Prostate gland (tissue), 2 donors: ENCODE measurements at regions of chr2 and their contacts with region 1.

Region 1: GRCh38 chr2:28566521-28567041 is 70.7 kb downstream of the PLB1 start:
- DNase-seq: peak; percentile 78
- H3K4me3 ChIP-seq: peak overlapping the region; percentile 48 to 51
- H3K27ac ChIP-seq: peak overlapping the region; percentile 76 to 82
- H3K4me1 ChIP-seq: no peaks in the 10 kb centered on the region
- H3K27me3 ChIP-seq: no peaks in the 10 kb centered on the region
- CTCF ChIP-seq: peak; percentile 99 to 100 (median 100)
- POLR2A ChIP-seq: no peak

Region 2: DNA sequence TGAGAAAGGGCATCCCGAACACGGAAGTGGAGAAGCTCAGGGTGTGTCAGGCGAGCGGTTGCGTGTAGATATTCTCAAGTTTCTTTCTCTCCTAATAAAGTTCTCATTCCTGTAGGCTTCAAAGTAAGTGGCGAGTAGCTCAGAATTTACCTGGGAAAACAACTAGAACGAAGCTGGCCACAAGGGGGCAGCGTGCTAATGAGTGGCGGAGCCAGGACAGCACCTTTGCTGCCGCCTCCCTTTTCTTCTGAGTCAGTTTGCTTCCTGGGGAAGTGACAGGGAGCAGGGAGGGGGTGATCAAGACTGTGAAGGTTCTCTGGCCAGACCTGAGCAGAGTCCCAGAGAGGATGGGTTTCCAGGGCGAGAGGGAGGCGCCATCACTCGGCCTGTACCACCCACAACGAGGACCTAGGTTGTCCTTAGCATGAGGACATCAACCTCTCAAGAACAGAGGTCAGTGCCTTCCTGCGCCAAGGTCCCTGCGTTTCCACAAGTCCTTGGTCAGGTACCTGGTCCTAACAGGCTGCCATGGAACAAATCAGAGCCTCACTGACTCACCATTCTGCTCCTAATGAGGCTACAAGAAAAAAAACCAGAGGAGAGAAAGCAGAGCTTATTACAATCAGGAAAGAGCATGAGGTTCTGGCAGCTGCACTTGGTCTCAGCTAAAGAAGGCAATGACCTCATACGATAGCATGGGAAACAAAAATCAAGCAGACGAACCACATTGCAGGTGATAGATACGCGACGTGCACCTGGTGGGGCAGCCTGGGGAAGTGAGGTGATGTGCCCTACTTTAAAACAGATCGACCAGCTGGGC is 27.9 kb after region 1 on chr2:
- intact Hi-C with region 1: loop called (anchors 2 kb)
- DNase-seq: peak; percentile 95
- H3K4me3 ChIP-seq: no peak overlapping the region
- H3K27ac ChIP-seq: peak overlapping the region; percentile 80 to 89
- H3K4me1 ChIP-seq: peaks cover 2% of the 10 kb centered on the region
- H3K27me3 ChIP-seq: no peaks in the 10 kb centered on the region
- CTCF ChIP-seq: peak; percentile 92 to 96 (median 94)
- POLR2A ChIP-seq: no peak

Region 3: DNA sequence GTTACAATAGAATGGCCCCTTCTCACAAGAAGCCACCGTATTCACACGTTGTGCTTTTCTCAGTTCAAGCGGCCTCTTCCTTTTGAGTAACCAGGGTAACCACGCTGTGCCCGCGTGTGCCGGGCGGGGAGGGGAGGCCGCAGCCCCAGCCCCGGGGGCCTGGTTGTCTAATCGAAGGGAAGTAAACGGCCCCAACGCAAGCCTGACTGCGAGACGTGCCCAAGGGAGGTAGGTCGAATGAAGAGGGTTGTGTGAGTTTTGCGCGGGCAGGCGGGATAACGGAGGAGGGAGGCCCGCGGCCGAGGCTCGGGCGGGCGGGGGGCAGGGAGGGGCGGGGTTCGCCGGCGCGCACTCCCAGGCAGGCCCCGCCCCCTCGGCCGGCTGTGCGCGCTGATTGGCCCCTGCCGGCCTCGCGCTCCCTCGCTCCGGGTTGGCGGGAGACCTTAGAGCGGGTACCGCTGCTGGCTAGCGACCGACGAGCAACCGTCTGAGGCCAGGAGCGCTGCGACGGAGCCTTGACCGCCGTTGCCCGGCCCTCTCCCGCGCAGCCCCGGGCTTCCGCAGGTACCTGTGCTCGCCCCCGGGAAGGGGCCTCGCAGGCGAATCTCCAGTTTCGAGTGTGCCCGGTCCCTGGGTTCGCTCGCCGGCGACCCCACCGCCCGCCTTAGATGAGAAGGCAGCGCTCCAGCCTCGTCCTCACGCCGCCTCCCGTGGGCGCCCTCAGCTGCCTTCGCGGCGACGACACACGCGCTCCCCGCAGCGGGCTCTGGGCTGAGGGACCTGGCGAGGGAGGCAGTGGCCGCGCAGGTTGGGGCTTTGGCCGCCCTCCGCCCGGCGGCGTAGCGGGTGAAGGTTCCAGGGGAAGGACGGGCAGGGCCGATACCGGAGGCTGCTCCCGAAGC is 244.1 kb after region 1 on chr2 and contains the start of gene SPDYA:
- intact Hi-C with region 1: loop called (anchors 5 kb)
- DNase-seq: peak; percentile 61
- H3K4me3 ChIP-seq: peak within 1 kb of the TSS; percentile 30 to 36
- H3K27ac ChIP-seq: peak within 1 kb of the TSS; percentile 32 to 37
- H3K4me1 ChIP-seq: no peaks in the 10 kb centered on the region
- H3K27me3 ChIP-seq: no peaks in the 10 kb centered on the region
- CTCF ChIP-seq: peak in 1 of 4 experiments; percentile 10
- POLR2A ChIP-seq: no peak
- total RNA-seq, gene SPDYA: 0.73 to 7.3 TPM

Region 4: DNA sequence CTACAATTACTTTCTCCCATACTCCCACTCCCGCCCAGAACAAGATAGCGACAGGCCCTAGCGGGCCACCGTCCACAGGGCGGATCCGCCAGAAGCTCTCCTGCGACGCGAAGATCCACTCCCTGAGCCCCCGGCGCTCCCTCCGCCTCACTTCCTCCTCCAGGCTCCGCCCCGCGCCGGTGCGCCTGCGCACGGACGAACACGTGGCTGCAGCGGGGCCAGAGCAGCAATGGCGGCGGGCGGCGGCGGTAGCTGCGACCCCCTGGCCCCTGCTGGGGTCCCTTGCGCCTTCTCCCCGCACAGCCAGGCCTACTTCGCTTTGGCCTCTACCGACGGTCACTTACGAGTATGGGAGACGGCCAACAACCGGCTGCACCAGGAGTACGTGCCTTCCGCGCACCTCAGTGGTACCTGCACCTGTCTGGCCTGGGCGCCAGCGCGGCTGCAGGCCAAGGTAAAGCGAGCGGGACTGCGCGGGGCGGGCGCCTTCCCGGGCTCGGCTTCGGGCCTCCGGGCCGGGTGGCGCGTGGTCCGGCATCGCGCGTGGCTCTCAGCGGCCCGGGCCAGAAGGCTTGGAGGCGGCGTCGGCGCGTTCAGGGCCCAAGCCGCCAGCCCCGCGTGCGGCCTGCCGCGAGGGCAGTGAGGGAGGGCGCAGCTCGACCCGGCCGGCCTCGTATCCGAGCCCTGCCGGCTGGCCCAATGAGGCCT is 328.0 kb after region 1 on chr2 and contains the start of gene WDR43:
- intact Hi-C with region 1: loop called (anchors 10 kb)
- DNase-seq: peak; percentile 96
- H3K4me3 ChIP-seq: peak within 1 kb of the TSS; percentile 89 to 98
- H3K27ac ChIP-seq: peak within 1 kb of the TSS; percentile 55 to 56
- H3K4me1 ChIP-seq: peaks cover 8% of the 10 kb centered on the region
- H3K27me3 ChIP-seq: no peaks in the 10 kb centered on the region
- CTCF ChIP-seq: peak in 2 of 4 experiments; percentile 25 to 26
- POLR2A ChIP-seq: peak; percentile 67
- total RNA-seq, gene WDR43: 30.6 to 36.9 TPM

Region 5: GRCh38 chr2:29000481-29000880 is 433.9 kb after region 1 on chr2:
- intact Hi-C with region 1: no loop called
- DNase-seq: no peak
- H3K4me3 ChIP-seq: no peak overlapping the region
- H3K27ac ChIP-seq: no peak overlapping the region
- H3K4me1 ChIP-seq: no peaks in the 10 kb centered on the region
- H3K27me3 ChIP-seq: no peaks in the 10 kb centered on the region
- CTCF ChIP-seq: no peak
- POLR2A ChIP-seq: no peak